Activated CD8-positive, alpha-beta memory T cell treated with anti-CD3 and anti-CD28 coated beads, Interleukin-2, amount 10 ng/mL, durations not matched to agents 7 days and 5 days (primary cell): ENCODE measurements at regions of chr22 and their contacts with region 1.

Region 1: GRCh38 chr22:17785185-17786184 is 11.2 kb upstream of the BID start:
- DNase-seq: peak; percentile 77
- ATAC-seq: peak; percentile 70
- H3K4me3 Mint-ChIP-seq: no peak overlapping the region
- H3K27ac Mint-ChIP-seq: no peak overlapping the region
- H3K4me1 Mint-ChIP-seq: peaks cover 15% of the 10 kb centered on the region
- H3K27me3 Mint-ChIP-seq: no peaks in the 10 kb centered on the region

Region 2: GRCh38 chr22:17754233-17754925 is 31.1 kb before region 1 on chr22:
- CTCF ChIA-PET with region 1: interaction called, 24 read pairs
- DNase-seq: no peak
- ATAC-seq: no peak
- H3K4me3 Mint-ChIP-seq: no peak overlapping the region
- H3K27ac Mint-ChIP-seq: no peak overlapping the region
- H3K4me1 Mint-ChIP-seq: no peaks in the 10 kb centered on the region
- H3K27me3 Mint-ChIP-seq: no peaks in the 10 kb centered on the region